Left ventricle myocardium superior (tissue), 1 donor: ENCODE measurements at regions of chr7 and their contacts with region 1.

Region 1: DNA sequence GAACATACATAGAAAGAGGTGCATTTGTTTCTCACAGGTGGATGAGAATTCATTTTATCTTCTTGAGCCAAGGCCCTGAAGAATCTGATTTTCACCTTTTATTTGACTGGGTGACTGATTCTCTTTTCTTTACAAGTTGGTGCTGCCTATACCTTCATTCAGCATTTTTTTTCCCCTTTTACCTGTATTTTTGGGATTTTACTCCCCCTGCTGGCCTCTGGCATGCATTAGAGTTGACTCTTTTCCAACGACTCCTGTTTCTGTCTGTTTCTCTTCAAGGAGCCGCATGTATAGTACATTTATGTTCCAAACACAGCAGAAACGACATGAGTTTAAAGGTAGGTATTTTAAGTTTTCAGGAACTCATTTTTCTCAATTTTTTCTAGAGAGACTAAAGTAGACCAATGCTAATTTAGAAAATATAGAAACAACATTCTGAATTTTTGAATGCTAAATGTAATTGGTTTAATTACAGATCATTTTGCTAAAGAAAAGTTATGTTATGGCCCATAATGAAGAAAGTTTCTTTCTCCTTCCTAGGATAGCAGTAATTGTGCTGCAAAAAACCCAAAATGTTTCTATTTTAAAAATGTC is 149.8 kb upstream of the HDAC9 start:
- DNase-seq: no peak
- ATAC-seq: peak; percentile 36

Region 2: GRCh38 chr7:17706734-17707133 is 639.0 kb before region 1 on chr7:
- intact Hi-C with region 1: loop called (anchors 10 kb)
- DNase-seq: no peak
- ATAC-seq: peak; percentile 81

Region 3: GRCh38 chr7:17882685-17883084 is 463.1 kb before region 1 on chr7:
- intact Hi-C with region 1: no loop called
- DNase-seq: no peak
- ATAC-seq: no peak

Region 4: GRCh38 chr7:17986851-17987250 is 358.9 kb before region 1 on chr7:
- intact Hi-C with region 1: loop called (anchors 10 kb)
- DNase-seq: no peak
- ATAC-seq: peak; percentile 76

Region 5: GRCh38 chr7:18064242-18064838 is 281.4 kb before region 1 on chr7:
- intact Hi-C with region 1: loop called (anchors 10 kb)
- DNase-seq: no peak
- ATAC-seq: peak; percentile 25

Region 6: DNA sequence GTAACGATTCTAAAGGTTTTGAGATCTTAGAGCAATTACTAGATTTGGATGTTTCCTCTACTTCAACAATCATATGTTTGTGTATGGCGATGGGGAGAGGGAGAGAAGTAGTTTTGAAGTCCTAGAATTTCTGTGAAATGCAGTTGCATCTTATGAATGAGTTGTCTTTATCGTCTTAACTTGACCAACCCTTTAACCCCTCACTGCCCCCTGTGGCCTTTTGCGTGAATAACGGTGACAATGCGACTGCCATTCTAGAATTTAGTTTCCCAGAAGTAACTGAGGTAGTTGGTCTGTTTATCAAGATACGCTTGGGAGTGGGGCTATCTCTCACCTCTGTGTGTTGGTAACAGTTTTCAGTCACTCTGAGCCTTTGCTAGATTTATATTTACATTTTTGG is 354.4 kb after region 1 on chr7:
- intact Hi-C with region 1: no loop called
- DNase-seq: no peak
- ATAC-seq: no peak